HepG2 (cell line): ENCODE measurements at regions of chr11 and their contacts with region 1.

Region 1: GRCh38 chr11:78170874-78171549 is 17.4 kb downstream of the KCTD21 start:
- DNase-seq: peak; percentile 71
- ATAC-seq: peak; percentile 61
- H3K4me3 ChIP-seq: no peak overlapping the region
- H3K27ac ChIP-seq: no peak overlapping the region
- H3K4me1 ChIP-seq: peaks cover 38% of the 10 kb centered on the region
- H3K27me3 ChIP-seq: no peaks in the 10 kb centered on the region
- CTCF ChIP-seq: no peak
- EP300 ChIP-seq: peak in 1 of 2 experiments; percentile 67; a peak in 2 of 4 replicates
- POLR2A ChIP-seq: no peak
- RAD21 ChIP-seq: no peak

Region 2: GRCh38 chr11:78156105-78156830 is 14.7 kb before region 1 on chr11:
- CTCF ChIA-PET with region 1: no interaction called
- POLR2A ChIA-PET with region 1: interaction called, 14 read pairs
- in situ Hi-C with region 1: no loop called
- intact Hi-C with region 1: no loop called
- DNase-seq: peak; percentile 95
- ATAC-seq: peak; percentile 98
- H3K4me3 ChIP-seq: peak overlapping the region in 1 of 3 experiments; percentile 45; a peak in 2 of 6 replicates
- H3K27ac ChIP-seq: peak overlapping the region; percentile 84
- H3K4me1 ChIP-seq: peaks cover 56% of the 10 kb centered on the region
- H3K27me3 ChIP-seq: no peaks in the 10 kb centered on the region
- CTCF ChIP-seq: 0 out of 2 replicates have a peak, but pooled peaks have one; percentile 5
- EP300 ChIP-seq: peak; percentile 58 to 95; a peak in 3 of 4 replicates
- POLR2A ChIP-seq: no peak
- RAD21 ChIP-seq: peak; percentile 24; the same call in 1 of the 2 replicates

Region 3: GRCh38 chr11:78188286-78189173 is 17.5 kb after region 1 on chr11 and contains the starts of genes KCTD21 and USP35:
- CTCF ChIA-PET with region 1: no interaction called
- POLR2A ChIA-PET with region 1: interaction called, 14 read pairs
- in situ Hi-C with region 1: no loop called
- intact Hi-C with region 1: no loop called
- DNase-seq: peak; percentile 92
- ATAC-seq: peak; percentile 93
- H3K4me3 ChIP-seq: peak within 1 kb of the TSS; percentile 78 to 96 (median 86)
- H3K27ac ChIP-seq: peak within 1 kb of the TSS; percentile 47
- H3K4me1 ChIP-seq: peaks cover 78% of the 10 kb centered on the region
- H3K27me3 ChIP-seq: no peaks in the 10 kb centered on the region; a peak in 1 of 5 replicates
- CTCF ChIP-seq: peak; percentile 9; the same call in 1 of the 2 replicates
- EP300 ChIP-seq: peak in 1 of 2 experiments; percentile 19; a peak in 2 of 4 replicates
- POLR2A ChIP-seq: peak in 1 of 2 experiments; percentile 85; a peak in 2 of 4 replicates
- RAD21 ChIP-seq: 0 out of 2 replicates have a peak, but pooled peaks have one; percentile 13
- total RNA-seq, gene KCTD21: 3.1 and 3.9 TPM in 2 replicates
- total RNA-seq, gene USP35: 1.8 and 4.6 TPM in 2 replicates